CD4-positive, alpha-beta T cell (primary cell): ENCODE measurements at regions of chr3 and their contacts with region 1.

Region 1: DNA sequence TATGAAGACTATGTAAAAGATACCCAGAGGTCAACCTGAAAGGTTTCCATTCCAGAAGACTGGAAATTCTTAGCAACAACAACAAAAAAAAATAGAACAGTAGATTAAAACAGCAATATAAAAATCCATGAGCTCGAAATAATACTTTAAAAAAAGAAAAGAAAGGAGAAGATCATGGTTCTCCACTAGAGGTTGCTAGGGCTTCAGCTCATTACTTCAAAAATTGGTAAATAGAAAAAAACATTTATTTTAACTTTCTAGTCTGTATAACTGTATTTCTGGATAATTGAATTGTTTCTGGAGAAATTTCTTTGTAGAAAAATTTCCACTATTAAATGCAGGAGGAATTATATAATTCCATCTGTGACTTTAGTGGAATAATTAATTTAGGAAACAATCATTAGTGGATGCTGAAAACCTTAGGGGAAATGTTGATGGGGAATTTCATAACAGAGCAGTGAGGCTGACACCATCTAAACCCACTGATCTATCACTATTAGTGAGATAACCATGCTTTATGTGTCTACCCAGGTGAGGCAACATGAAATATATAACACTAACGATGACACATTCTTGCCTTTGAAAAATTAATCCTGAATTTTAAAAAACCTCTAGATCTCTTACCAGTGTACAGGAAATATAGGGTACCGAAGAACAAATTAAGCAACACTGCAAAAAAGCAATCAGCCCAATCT is 62.5 kb upstream of the SNRK start:
- DNase-seq: peak in 3 of 14 experiments; percentile 49 to 56 (median 52)
- ATAC-seq: no peak
- H3K4me3 ChIP-seq: no peak overlapping the region
- H3K4me3 Mint-ChIP-seq: peak overlapping the region; percentile 2
- H3K27ac ChIP-seq: no peak overlapping the region
- H3K27ac Mint-ChIP-seq: peak overlapping the region; percentile 86
- H3K4me1 ChIP-seq: peaks cover 28% of the 10 kb centered on the region
- H3K4me1 Mint-ChIP-seq: peaks cover 60% of the 10 kb centered on the region
- H3K27me3 ChIP-seq: no peaks in the 10 kb centered on the region
- H3K27me3 Mint-ChIP-seq: no peaks in the 10 kb centered on the region
- CTCF ChIP-seq: peak; percentile 65

Region 2: GRCh38 chr3:41863024-41863423 is 1360.8 kb before region 1 on chr3:
- CTCF ChIA-PET with region 1: no interaction called
- POLR2A ChIA-PET with region 1: no interaction called
- intact Hi-C with region 1: no loop called
- DNase-seq: no peak
- ATAC-seq: no peak
- H3K4me3 ChIP-seq: no peak overlapping the region
- H3K4me3 Mint-ChIP-seq: no peak overlapping the region
- H3K27ac ChIP-seq: no peak overlapping the region
- H3K27ac Mint-ChIP-seq: no peak overlapping the region
- H3K4me1 ChIP-seq: no peaks in the 10 kb centered on the region
- H3K4me1 Mint-ChIP-seq: no peaks in the 10 kb centered on the region
- H3K27me3 ChIP-seq: no peaks in the 10 kb centered on the region
- H3K27me3 Mint-ChIP-seq: no peaks in the 10 kb centered on the region
- CTCF ChIP-seq: no peak

Region 3: DNA sequence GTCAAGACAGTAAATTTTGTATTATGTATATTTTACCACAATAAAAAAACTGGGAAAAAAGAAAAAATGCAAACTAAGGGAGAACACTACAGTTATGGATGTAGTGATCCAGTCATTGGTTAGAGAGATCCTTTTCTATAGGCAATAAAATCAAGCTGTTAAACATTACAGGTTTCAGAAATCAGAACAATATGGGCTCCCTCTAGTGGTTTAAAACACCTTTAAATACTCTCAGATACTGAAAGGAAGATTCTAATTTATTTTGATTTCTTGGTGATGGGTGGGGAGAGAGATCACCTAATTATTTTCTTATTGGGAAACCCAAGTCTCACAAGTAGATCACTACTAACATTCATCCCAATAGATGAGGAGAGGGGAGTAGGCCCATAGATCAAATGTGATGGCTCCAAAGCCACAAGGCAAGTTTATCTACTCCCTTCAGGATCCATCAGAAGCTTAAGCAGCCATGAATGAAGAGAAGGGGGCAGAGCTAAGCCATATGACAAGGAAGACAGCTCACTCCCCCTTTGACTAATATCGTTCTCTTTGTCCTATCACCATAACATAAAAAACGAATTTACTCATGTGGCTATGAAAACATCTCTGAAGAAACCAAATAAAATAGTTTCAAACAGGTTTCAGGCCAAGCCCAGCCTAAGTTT is 279.4 kb after region 1 on chr3:
- CTCF ChIA-PET with region 1: interaction called, 15 read pairs
- POLR2A ChIA-PET with region 1: interaction called, 14 read pairs
- intact Hi-C with region 1: loop called (anchors 1 to 2 kb)
- DNase-seq: peak in 3 of 14 experiments; percentile 64 to 71 (median 67)
- ATAC-seq: peak; percentile 63
- H3K4me3 ChIP-seq: no peak overlapping the region
- H3K4me3 Mint-ChIP-seq: no peak overlapping the region
- H3K27ac ChIP-seq: no peak overlapping the region
- H3K27ac Mint-ChIP-seq: peak overlapping the region; percentile 31
- H3K4me1 ChIP-seq: peaks cover 26% of the 10 kb centered on the region
- H3K4me1 Mint-ChIP-seq: peaks cover 50% of the 10 kb centered on the region
- H3K27me3 ChIP-seq: no peaks in the 10 kb centered on the region
- H3K27me3 Mint-ChIP-seq: no peaks in the 10 kb centered on the region
- CTCF ChIP-seq: peak; percentile 68